Activated CD8-positive, alpha-beta T cell treated with anti-CD3 and anti-CD28 coated beads for 36 hours (primary cell): ENCODE measurements at regions of chr3 and their contacts with region 1.

Region 1: GRCh38 chr3:42012935-42013690 is 51.2 kb upstream of the ULK4 start:
- DNase-seq: peak; percentile 75
- ATAC-seq: peak; percentile 75
- H3K4me3 Mint-ChIP-seq: peak overlapping the region; percentile 80
- H3K27ac Mint-ChIP-seq: peak overlapping the region; percentile 93
- H3K4me1 Mint-ChIP-seq: peaks cover 38% of the 10 kb centered on the region
- H3K27me3 Mint-ChIP-seq: no peaks in the 10 kb centered on the region
- CTCF ChIP-seq: no peak

Region 2: DNA sequence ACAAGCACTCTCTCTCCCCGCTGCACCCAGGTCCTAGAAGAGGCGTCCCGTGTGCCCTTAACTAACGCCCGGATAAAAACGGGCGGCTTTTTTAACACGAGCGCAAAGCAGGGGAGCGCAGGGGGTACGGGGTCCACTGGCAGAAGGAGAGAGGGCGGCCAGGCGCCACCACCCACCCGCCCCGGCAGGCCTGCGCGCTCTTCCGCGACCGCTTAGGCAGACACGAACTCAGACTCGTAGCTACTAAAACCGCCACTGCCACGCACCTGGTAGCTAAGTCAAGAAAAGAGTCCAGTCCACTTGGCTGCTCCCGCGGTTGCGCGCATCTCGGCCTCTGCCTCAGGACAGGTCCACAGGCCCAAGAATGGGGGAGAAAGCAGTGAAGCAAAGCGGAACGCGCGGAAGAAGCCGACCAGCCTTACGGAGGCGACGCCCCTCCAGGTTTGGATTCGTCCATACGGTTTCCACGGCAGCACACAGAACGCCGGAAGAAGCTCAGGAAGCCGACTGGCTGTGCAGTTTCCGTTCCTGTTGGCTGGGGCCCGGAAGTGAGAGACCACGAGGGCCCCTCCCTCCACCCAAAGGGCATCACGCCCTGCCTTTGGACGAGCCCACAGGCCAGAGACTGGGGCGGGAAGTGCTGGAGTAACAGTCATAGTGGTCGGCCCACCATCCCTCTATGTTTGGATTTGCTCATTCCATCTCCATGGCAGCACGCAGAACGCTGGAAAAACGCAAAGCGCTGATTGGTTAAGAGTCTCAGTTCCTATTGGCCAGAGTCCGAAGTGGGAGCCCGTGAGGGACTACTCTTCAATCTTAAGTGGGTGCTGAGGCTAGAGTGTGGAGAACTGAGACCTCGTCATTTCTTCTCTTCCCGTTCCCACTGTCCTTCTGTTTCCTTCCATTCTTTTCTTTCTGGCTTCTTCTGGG is 51.1 kb before region 1 on chr3 and contains the start of gene ULK4:
- CTCF ChIA-PET with region 1: interaction called, 5 read pairs
- POLR2A ChIA-PET with region 1: interaction called, 5 read pairs
- intact Hi-C with region 1: loop called (anchors 5 kb)
- DNase-seq: peak; percentile 96
- ATAC-seq: peak; percentile 91
- H3K4me3 Mint-ChIP-seq: peak within 1 kb of the TSS; percentile 85
- H3K27ac Mint-ChIP-seq: peak within 1 kb of the TSS; percentile 88
- H3K4me1 Mint-ChIP-seq: peaks cover 9% of the 10 kb centered on the region
- H3K27me3 Mint-ChIP-seq: no peaks in the 10 kb centered on the region
- CTCF ChIP-seq: no peak
- total RNA-seq, gene ULK4: 6.8 to 6.9 TPM

Region 3: DNA sequence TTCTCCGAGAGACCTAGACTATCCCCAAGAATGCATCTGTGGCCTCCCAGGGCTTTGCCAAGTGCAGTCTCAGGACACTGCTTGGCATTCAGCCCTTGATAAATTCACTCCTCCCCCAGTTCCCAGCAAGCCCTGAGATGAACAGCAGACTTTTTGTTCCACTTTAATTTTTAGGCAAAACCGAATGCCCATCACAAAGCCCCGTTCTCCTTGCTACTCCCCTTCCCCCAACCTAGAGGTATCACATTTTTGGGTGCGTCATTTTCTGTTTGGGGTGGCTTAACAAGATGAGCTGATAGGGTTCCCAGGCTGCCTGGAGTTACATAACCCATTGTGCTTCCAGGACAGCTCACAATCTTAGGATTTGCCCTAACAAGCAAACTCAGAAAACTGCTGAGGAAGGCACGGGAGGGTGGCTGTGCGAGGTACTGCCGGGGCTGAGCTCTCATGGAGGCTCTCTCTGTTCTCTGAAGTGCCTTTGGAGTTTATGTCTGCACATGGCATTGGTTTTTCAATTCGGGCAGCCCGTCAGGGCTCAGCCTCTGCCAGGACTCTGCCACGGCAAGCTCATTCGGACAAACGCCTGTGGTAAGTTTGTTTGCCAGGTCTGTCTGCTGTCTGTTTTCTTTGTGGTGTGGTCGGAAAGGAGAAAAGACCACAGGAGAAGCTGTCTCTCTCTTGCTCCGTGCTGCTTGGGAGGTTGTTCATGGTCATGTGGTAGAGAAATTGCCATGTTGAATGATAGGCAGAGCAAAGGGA is 78.0 kb after region 1 on chr3 and contains the start of gene TRAK1:
- CTCF ChIA-PET with region 1: interaction called, 3 read pairs
- POLR2A ChIA-PET with region 1: interaction called, 7 read pairs
- intact Hi-C with region 1: loop called (anchors 5 kb)
- DNase-seq: no peak
- ATAC-seq: no peak
- H3K4me3 Mint-ChIP-seq: peak within 1 kb of the TSS; percentile 28
- H3K27ac Mint-ChIP-seq: peak within 1 kb of the TSS; percentile 39
- H3K4me1 Mint-ChIP-seq: peaks cover 75% of the 10 kb centered on the region
- H3K27me3 Mint-ChIP-seq: no peaks in the 10 kb centered on the region
- CTCF ChIP-seq: no peak
- total RNA-seq, gene TRAK1: 24.1 to 24.3 TPM